H1 (cell line): ENCODE measurements at regions of chr1 and their contacts with region 1.

Region 1: GRCh38 chr1:203340112-203340804 is 10.7 kb downstream of the FMOD start:
- DNase-seq: no peak
- H3K4me3 ChIP-seq: no peak overlapping the region
- H3K27ac ChIP-seq: 0 out of 2 replicates have a peak overlapping the region, but pooled peaks have one; percentile 13
- H3K4me1 ChIP-seq: peaks cover 2 to 4% (median 3%) of the 10 kb centered on the region in 4 experiments; a peak in 5 of 7 replicates
- H3K27me3 ChIP-seq: peaks cover 0 to 3% (median 0%) of the 10 kb centered on the region in 4 experiments; a peak in 2 of 7 replicates
- CTCF ChIP-seq: peak; percentile 78 to 96 (median 88)
- EP300 ChIP-seq: no peak
- POLR2A ChIP-seq: no peak
- RAD21 ChIP-seq: peak; percentile 95 to 96

Region 2: DNA sequence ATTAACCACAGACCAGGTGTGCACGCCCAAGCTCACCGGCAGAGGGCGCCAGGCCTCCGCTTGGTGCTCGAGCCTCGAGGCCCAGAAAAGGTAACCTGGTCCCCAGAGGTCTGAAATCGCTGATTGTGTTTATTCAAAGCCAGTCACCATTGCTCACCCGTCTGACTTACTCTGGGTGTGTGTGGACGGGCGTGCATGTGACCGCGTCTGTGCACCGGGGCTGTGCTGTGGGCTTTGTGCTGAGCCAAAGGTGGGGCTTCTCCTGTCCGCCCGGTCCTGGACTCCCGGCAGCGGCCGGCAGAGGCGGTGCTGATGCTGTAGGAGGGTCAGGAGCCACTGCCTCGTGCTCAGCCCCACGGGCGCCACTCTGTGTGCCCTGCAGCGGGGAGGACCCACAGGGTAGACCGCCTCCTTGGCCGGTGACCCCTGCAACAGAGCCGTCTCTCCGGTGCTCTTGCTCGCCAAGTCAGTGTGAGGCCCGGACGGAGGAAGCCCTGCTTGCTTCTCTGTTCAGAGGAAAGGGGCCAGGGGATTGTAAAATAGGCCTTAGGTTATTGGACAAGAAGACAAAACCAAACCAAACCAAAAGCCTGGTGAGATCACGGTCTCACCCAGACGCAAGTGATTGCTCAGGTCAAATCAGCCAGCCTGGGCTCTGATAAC is 66.9 kb before region 1 on chr1:
- CTCF ChIA-PET with region 1: interaction called, 785 read pairs
- POLR2A ChIA-PET with region 1: no interaction called
- DNase-seq: peak; percentile 46 to 94
- H3K4me3 ChIP-seq: peak overlapping the region in 3 of 4 experiments; percentile 37 to 57 (median 52); a peak in 6 of 8 replicates
- H3K27ac ChIP-seq: no peak overlapping the region
- H3K4me1 ChIP-seq: peaks cover under 1 to 9% (median 7%) of the 10 kb centered on the region in 4 experiments; a peak in 6 of 7 replicates
- H3K27me3 ChIP-seq: peaks cover 0 to 31% (median 10%) of the 10 kb centered on the region in 4 experiments; a peak in 5 of 7 replicates
- CTCF ChIP-seq: peak; percentile 91 to 94 (median 92)
- EP300 ChIP-seq: no peak
- POLR2A ChIP-seq: no peak
- RAD21 ChIP-seq: peak; percentile 87 to 88

Region 3: GRCh38 chr1:203326830-203327683 is 13.2 kb before region 1 on chr1:
- CTCF ChIA-PET with region 1: interaction called, 66 read pairs
- POLR2A ChIA-PET with region 1: interaction called, 3 read pairs
- DNase-seq: peak in 1 of 2 experiments; percentile 94
- H3K4me3 ChIP-seq: peak overlapping the region; percentile 41 to 64 (median 46); a peak in 7 of 8 replicates
- H3K27ac ChIP-seq: no peak overlapping the region
- H3K4me1 ChIP-seq: peaks cover 8 to 30% (median 21%) of the 10 kb centered on the region in 4 experiments
- H3K27me3 ChIP-seq: peaks cover 0 to 24% (median 16%) of the 10 kb centered on the region in 4 experiments; a peak in 4 of 7 replicates
- CTCF ChIP-seq: peak in 1 of 3 experiments; percentile 37; a peak in 2 of 4 replicates
- EP300 ChIP-seq: no peak
- POLR2A ChIP-seq: peak in 1 of 2 experiments; percentile 29; a peak in 1 of 3 replicates
- RAD21 ChIP-seq: 0 out of 4 replicates have a peak, but pooled peaks of 1 of the 2 experiments have one; percentile 5

Region 4: DNA sequence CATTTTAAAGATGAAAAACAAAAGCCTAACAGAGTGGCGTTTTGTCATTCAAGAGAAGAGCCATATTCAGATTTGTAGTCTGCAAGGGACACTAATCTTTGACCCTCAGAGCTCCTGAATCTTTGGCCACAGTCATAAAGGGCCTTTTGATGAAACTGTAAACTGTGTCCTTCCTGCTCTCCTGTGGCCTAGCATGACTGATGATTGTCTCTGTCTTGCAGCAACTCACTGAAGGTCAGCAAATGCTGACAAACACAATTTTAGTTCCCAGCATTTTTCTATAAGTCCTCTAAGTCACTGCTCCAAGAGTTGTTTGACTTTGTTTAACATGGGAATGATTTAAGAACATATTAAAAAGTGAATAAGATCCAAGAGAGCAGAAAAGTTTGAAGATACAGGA is 80.0 kb after region 1 on chr1:
- CTCF ChIA-PET with region 1: interaction called, 10 read pairs
- POLR2A ChIA-PET with region 1: no interaction called
- DNase-seq: no peak
- H3K4me3 ChIP-seq: no peak overlapping the region
- H3K27ac ChIP-seq: no peak overlapping the region
- H3K4me1 ChIP-seq: no peaks in the 10 kb centered on the region
- H3K27me3 ChIP-seq: no peaks in the 10 kb centered on the region
- CTCF ChIP-seq: no peak
- EP300 ChIP-seq: no peak
- POLR2A ChIP-seq: no peak
- RAD21 ChIP-seq: no peak

Region 5: DNA sequence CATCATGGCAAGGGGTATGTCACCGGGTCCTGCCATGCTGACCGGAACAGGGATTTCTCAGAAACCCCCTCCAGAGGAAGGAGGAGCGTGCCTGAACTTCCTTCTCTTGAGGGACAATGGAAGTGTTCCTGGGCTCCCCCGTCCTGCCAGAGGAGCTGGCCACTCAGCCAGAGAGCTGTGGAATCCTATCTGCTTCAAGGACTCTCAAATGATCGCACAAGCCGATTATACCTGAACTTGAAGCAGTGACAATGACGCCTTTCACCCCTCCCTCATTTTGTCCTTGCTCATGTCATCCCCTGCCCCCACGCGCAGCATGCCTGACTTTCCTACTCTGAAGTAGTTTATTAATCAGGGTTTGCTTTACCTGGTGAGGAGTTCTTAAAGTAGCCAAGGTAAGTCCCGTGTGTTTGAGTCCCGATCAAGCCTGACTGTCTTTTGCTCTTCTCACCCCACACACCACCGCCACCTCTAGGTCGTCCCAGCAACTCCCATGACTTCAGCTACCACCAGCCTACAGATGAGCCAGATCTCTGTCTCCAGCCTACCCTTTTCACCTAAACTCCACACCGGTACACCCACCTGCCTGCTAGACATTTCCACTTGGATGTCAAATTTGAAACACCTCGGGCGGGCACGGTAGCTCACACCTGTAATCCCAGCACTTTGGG is 110.4 kb after region 1 on chr1:
- CTCF ChIA-PET with region 1: interaction called, 166 read pairs
- POLR2A ChIA-PET with region 1: no interaction called
- DNase-seq: no peak
- H3K4me3 ChIP-seq: no peak overlapping the region
- H3K27ac ChIP-seq: no peak overlapping the region
- H3K4me1 ChIP-seq: peaks cover 0 to 2% (median 0%) of the 10 kb centered on the region in 4 experiments; a peak in 2 of 7 replicates
- H3K27me3 ChIP-seq: no peaks in the 10 kb centered on the region
- CTCF ChIP-seq: peak; percentile 57 to 70 (median 63)
- EP300 ChIP-seq: no peak
- POLR2A ChIP-seq: no peak
- RAD21 ChIP-seq: peak; percentile 56 to 65

Region 6: GRCh38 chr1:203492748-203493130 is 152.5 kb after region 1 on chr1:
- CTCF ChIA-PET with region 1: interaction called, 188 read pairs
- POLR2A ChIA-PET with region 1: interaction called, 4 read pairs
- DNase-seq: no peak
- H3K4me3 ChIP-seq: no peak overlapping the region
- H3K27ac ChIP-seq: no peak overlapping the region
- H3K4me1 ChIP-seq: peaks cover 0 to 15% (median 6%) of the 10 kb centered on the region in 4 experiments; a peak in 5 of 7 replicates
- H3K27me3 ChIP-seq: no peaks in the 10 kb centered on the region; a peak in 1 of 7 replicates
- CTCF ChIP-seq: no peak
- EP300 ChIP-seq: no peak
- POLR2A ChIP-seq: no peak
- RAD21 ChIP-seq: no peak

Region 7: DNA sequence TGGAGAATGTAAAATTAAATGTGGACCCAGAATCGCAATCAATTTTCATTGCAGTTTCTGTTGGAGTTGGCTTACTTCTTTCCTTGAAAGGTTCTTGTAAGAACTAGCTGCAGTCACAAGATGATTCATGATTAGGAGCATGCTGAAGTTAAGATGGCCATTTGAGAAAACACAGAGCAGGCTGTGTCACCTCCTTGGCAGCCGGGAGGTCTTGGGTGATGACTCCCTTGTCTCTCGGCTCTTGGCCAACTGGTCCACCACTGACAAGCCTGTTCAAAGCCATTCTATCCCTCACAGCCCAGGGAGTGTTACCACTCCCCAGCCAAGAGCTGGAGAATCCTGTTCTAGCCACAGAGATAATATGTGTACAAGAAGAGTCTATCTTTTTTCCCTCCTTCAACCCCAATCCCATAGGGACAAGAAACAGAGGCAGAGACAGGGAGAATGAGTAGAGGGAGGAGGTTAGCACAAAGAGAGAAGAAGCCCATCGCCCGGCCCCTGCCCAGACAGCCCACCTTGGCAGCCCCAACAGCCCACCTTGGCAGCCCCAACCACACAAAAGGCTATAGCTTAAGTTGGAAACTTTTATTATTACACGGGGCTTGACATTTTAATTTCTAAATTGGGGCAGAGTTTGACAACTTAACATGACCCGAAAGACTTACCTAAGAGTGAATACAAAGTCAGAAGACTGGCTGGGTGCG is 194.4 kb after region 1 on chr1:
- CTCF ChIA-PET with region 1: no interaction called
- POLR2A ChIA-PET with region 1: no interaction called
- DNase-seq: no peak
- H3K4me3 ChIP-seq: no peak overlapping the region
- H3K27ac ChIP-seq: no peak overlapping the region
- H3K4me1 ChIP-seq: no peaks in the 10 kb centered on the region
- H3K27me3 ChIP-seq: no peaks in the 10 kb centered on the region
- CTCF ChIP-seq: no peak
- EP300 ChIP-seq: no peak
- POLR2A ChIP-seq: no peak
- RAD21 ChIP-seq: no peak

Region 8: DNA sequence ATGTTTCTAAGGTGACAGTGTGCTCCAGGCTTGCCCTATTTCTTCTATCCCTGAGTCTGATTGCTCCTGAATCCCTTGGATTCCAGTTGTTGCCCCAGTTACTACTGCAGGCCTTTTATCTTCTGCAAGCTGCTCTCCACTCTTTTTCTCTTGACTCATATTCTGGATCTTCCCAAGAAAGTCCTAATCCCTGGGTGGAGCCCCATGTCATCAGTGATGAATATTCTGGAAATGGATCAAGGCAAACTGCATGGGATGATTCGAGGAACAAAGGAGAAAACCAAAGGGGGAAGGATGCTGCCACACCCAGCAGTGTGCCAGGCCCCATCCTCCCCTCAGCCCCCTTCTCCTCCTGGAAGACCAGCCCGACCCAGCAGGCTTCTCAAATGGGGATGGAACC is 223.0 kb after region 1 on chr1:
- CTCF ChIA-PET with region 1: no interaction called
- POLR2A ChIA-PET with region 1: no interaction called
- DNase-seq: no peak
- H3K4me3 ChIP-seq: no peak overlapping the region
- H3K27ac ChIP-seq: no peak overlapping the region
- H3K4me1 ChIP-seq: no peaks in the 10 kb centered on the region; a peak in 1 of 7 replicates
- H3K27me3 ChIP-seq: no peaks in the 10 kb centered on the region
- CTCF ChIP-seq: no peak
- EP300 ChIP-seq: no peak
- POLR2A ChIP-seq: no peak
- RAD21 ChIP-seq: no peak